HepG2 (cell line): ENCODE measurements at regions of chr19 and their contacts with region 1.

Region 1: GRCh38 chr19:42433503-42434260 is 6.5 kb upstream of the LIPE start:
- DNase-seq: peak; percentile 95
- ATAC-seq: peak; percentile 91
- H3K4me3 ChIP-seq: peak overlapping the region in 1 of 3 experiments; percentile 41; a peak in 2 of 6 replicates
- H3K27ac ChIP-seq: peak overlapping the region; percentile 58
- H3K4me1 ChIP-seq: peaks cover 54% of the 10 kb centered on the region
- H3K27me3 ChIP-seq: no peaks in the 10 kb centered on the region
- CTCF ChIP-seq: peak; percentile 93
- EP300 ChIP-seq: peak; percentile 50 to 80; a peak in 2 of 4 replicates
- POLR2A ChIP-seq: no peak
- RAD21 ChIP-seq: peak; percentile 88

Region 2: GRCh38 chr19:42386974-42387707 is 46.5 kb before region 1 on chr19:
- CTCF ChIA-PET with region 1: interaction called, 15 read pairs
- POLR2A ChIA-PET with region 1: no interaction called
- in situ Hi-C with region 1: no loop called
- intact Hi-C with region 1: no loop called
- DNase-seq: peak; percentile 63
- ATAC-seq: peak; percentile 95
- H3K4me3 ChIP-seq: peak overlapping the region; percentile 44 to 59 (median 54); a peak in 4 of 6 replicates
- H3K27ac ChIP-seq: no peak overlapping the region
- H3K4me1 ChIP-seq: peaks cover 6% of the 10 kb centered on the region; the same call in 1 of the 2 replicates
- H3K27me3 ChIP-seq: peaks cover 6 to 43% of the 10 kb centered on the region in 2 experiments; a peak in 4 of 5 replicates
- CTCF ChIP-seq: peak; percentile 76
- EP300 ChIP-seq: no peak
- POLR2A ChIP-seq: 0 out of 4 replicates have a peak, but pooled peaks of 1 of the 2 experiments have one; percentile 21
- RAD21 ChIP-seq: peak; percentile 65